ENCODE measurements at regions of chr1 and their contacts with region 1.

Region 1: GRCh38 chr1:203649999-203650855 is 23.6 kb downstream of the ATP2B4 start:
- DNase-seq: peak; percentile 56
- H3K4me3 Mint-ChIP-seq: peak overlapping the region; percentile 77
- H3K27ac Mint-ChIP-seq: peak overlapping the region; percentile 98
- H3K4me1 Mint-ChIP-seq: peaks cover 78% of the 10 kb centered on the region
- H3K27me3 Mint-ChIP-seq: no peaks in the 10 kb centered on the region

Region 2: GRCh38 chr1:203290261-203291089 is 359.8 kb before region 1 on chr1:
- intact Hi-C with region 1: loop called (anchors 1 kb)
- DNase-seq: peak; percentile 96
- H3K4me3 Mint-ChIP-seq: peak overlapping the region; percentile 83
- H3K27ac Mint-ChIP-seq: peak overlapping the region; percentile 99
- H3K4me1 Mint-ChIP-seq: peaks cover 89% of the 10 kb centered on the region
- H3K27me3 Mint-ChIP-seq: no peaks in the 10 kb centered on the region

Region 3: DNA sequence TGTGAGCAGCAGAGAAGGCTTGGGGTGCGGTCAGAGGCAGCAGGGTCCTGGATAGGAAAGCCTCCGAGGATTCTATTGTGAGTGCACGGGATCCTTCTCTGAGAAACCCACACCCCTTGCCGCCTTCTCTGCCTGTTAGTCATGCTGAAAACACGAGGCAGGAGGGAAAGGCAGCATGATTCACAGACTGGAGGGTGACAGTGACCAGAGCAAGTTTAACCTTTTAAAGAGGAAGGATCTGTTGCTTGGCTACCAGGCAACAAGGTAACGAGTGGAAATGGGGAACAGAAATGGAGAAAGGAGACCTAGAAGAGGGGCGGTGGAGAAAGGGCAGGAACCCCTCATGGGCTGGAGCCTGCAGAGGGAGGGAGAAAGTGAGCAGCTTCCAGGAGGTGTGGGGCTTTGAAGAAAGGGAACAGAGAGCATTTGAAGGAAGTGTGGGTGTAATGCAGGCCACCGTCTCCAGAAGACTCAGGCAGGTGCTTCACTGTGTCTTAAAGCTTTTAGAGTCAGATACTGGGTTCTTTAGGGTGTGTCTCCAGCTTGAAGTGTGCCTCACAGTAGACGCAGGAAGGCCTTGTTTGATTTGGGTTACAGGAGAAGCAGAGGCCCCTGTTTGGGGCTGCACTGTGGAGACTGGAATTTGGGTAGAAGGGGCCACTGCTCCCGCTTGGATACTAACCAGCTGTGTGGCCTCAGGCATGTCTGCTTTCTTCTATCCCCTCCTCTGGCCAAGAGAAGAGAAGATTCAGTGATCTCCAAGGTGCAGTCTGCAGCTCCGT is 137.2 kb before region 1 on chr1:
- intact Hi-C with region 1: loop called (anchors 2 kb)
- DNase-seq: peak; percentile 19
- H3K4me3 Mint-ChIP-seq: peak overlapping the region; percentile 50
- H3K27ac Mint-ChIP-seq: peak overlapping the region; percentile 95
- H3K4me1 Mint-ChIP-seq: peaks cover 30% of the 10 kb centered on the region
- H3K27me3 Mint-ChIP-seq: no peaks in the 10 kb centered on the region

Region 4: GRCh38 chr1:203663294-203663693 is 13.1 kb after region 1 on chr1:
- intact Hi-C with region 1: loop called (anchors 1 kb)
- DNase-seq: no peak
- H3K4me3 Mint-ChIP-seq: peak overlapping the region; percentile 21
- H3K27ac Mint-ChIP-seq: peak overlapping the region; percentile 90
- H3K4me1 Mint-ChIP-seq: peaks cover 68% of the 10 kb centered on the region
- H3K27me3 Mint-ChIP-seq: no peaks in the 10 kb centered on the region

Region 5: DNA sequence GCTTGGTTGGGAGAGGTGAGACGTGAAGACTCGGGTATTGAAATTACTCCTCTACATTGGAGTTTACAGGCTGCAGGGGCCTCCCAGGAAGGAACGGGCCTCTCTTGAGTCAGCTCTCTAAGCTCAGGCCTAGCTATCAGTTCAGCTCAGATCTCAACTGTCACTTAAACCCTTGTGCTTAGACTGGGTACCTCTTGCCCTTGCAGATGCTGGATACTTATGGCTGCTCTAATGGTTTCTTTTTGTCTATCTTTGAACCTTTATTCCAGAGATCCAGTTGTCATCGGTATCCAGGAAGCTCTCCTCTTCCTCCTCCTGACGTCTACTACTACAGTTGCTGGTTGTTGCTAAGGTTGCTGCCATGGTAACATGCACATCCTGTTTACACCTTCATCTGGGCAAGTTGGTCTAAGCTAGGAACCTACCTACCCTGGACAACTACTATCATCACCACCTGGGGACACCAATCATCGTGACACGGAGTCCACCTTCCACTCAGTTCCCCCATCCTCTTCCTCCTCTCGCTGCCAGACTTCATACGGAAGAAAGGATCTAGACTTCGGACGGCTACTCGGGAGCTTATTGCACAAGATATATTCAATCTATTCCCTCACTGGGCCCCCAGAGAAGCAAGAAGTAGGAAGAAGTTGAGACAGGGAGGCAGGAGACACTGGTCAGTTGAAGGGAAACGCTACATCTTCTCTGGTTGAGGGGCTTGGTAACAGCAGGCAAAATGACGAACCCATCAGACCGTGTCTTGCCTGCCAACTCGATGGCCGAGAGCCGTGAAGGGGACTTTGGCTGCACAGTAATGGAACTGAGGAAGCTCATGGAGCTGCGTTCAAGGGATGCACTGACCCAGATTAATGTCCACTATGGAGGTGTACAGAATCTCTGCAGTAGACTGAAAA is 32.5 kb after region 1 on chr1:
- intact Hi-C with region 1: loop called (anchors 1 kb)
- DNase-seq: peak; percentile 75
- H3K4me3 Mint-ChIP-seq: peak overlapping the region; percentile 40
- H3K27ac Mint-ChIP-seq: peak overlapping the region; percentile 95
- H3K4me1 Mint-ChIP-seq: peaks cover 52% of the 10 kb centered on the region
- H3K27me3 Mint-ChIP-seq: no peaks in the 10 kb centered on the region

Region 6: DNA sequence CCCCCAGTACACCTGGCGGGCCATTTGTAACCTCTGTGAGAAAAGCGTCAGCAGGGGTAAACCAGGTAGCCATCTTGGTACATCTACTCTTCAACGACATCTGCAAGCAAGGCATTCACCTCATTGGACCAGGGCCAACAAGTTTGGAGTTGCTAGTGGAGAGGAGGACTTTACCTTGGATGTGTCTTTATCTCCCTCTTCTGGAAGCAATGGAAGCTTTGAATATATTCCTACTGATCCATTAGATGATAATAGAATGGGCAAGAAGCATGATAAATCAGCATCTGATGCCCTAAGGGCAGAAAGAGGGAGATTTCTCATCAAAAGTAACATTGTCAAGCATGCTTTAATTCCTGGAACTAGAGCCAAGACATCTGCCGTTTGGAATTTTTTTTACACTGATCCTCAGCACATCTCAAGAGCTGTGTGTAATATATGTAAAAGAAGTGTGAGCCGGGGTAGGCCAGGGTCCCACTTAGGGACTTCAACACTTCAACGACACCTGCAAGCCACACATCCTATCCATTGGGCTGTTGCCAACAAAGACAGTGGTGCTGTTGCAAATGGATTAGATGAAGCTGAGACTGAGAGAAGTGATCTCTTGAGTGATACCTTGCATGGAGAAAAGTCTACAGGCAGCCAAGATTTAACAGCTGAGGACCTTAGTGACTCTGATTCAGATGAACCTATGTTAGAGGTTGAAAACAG is 147.9 kb after region 1 on chr1:
- intact Hi-C with region 1: no loop called
- DNase-seq: no peak
- H3K4me3 Mint-ChIP-seq: peak overlapping the region; percentile 96
- H3K27ac Mint-ChIP-seq: no peak overlapping the region
- H3K4me1 Mint-ChIP-seq: peaks cover 56% of the 10 kb centered on the region
- H3K27me3 Mint-ChIP-seq: no peaks in the 10 kb centered on the region

Measured in activated T-helper 1 cell treated with anti-CD3 and anti-CD28 coated beads, Interleukin-12 subunit alpha, Interleukin-12 subunit beta, Interleukin-2, Interleukin-4 antibody, amounts not matched to agents 30 ng/mL and 10 ng/mL and 1 ng/mL, durations not matched to agents 14 hours and 24 hours and 36 hours (primary cell).